Ovary (tissue), 10 donors: ENCODE measurements at regions of chr12 and their contacts with region 1.

Region 1: DNA sequence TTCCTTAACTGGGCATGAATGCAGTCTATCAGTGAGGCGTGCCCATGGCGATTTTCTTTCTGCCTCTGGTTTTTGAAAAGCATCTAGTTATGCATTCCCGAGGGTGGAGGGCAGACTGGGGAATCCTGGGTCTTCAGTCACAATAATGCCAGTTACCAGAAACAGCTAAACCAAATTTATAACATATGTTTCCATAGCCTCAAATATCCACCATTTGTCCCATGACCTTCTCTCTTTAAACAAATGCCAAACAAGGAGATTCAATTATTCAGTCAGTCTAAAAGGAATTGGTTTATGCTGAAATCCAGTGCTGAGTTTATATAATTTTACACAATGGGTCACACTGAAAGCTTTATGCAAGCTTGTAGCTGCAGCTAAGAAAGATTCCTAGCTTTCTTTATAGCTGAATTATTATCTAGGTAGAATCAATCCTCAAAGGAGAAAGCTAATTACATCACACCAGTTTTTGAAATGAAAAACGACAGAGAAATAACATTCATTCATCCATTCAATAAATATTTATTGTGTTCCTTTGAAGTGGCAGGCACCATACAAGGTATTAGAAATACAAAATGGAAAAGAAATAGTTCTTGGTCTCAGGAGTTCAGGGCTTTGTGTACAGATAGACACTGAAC is 131.3 kb upstream of the RAP1B start:
- DNase-seq: no peak
- H3K4me3 ChIP-seq: no peak overlapping the region
- H3K27ac ChIP-seq: no peak overlapping the region
- H3K4me1 ChIP-seq: no peaks in the 10 kb centered on the region
- H3K27me3 ChIP-seq: no peaks in the 10 kb centered on the region
- CTCF ChIP-seq: no peak
- EP300 ChIP-seq: no peak
- POLR2A ChIP-seq: no peak

Region 2: GRCh38 chr12:68499616-68500015 is 20.2 kb after region 1 on chr12:
- intact Hi-C with region 1: loop called in 1 of 4 experiments (anchors 1 kb)
- DNase-seq: no peak
- H3K4me3 ChIP-seq: no peak overlapping the region
- H3K27ac ChIP-seq: no peak overlapping the region
- H3K4me1 ChIP-seq: no peaks in the 10 kb centered on the region
- H3K27me3 ChIP-seq: no peaks in the 10 kb centered on the region
- CTCF ChIP-seq: no peak
- EP300 ChIP-seq: no peak
- POLR2A ChIP-seq: no peak

Region 3: GRCh38 chr12:68538726-68539614 is 59.6 kb after region 1 on chr12:
- intact Hi-C with region 1: no loop called
- DNase-seq: peak; percentile 25 to 63 (median 51)
- H3K4me3 ChIP-seq: peak overlapping the region; percentile 4
- H3K27ac ChIP-seq: no peak overlapping the region
- H3K4me1 ChIP-seq: no peaks in the 10 kb centered on the region
- H3K27me3 ChIP-seq: no peaks in the 10 kb centered on the region
- CTCF ChIP-seq: no peak
- EP300 ChIP-seq: no peak
- POLR2A ChIP-seq: no peak